Gastrocnemius medialis (tissue), 4 donors: ENCODE measurements at regions of chr18 and their contacts with region 1.

Region 1: DNA sequence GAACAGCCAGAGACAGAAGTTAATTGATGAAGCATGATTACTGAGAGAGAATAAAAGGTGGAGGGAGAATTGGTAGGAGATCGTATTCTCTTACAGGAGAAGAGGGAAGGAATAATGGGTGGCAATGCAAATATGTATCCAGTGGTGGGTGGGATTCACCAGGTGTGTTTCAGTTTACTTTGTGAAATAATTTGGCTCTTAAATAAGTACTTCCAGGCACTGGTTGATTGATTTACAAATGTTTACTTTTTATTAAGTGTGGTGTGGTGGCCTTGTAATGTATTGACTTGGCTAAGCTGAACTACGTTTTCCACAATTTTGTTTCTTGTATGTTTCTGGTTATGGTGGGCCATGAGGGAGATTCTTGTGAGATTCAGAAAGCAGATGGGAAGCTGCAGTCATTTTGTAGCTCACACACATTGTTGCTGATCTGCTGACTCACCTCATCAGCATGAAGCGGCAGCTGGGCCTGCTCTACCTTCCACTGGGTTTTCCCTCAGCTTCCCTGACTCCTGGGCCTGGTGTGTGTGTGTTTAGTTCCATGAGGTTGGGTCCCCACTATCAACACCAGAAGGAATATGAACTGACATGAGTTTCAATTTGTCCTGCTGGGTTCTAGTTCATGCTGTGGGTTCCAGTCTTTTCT is 32.6 kb downstream of the MYL12B start:
- DNase-seq: no peak
- ATAC-seq: no peak
- H3K4me3 ChIP-seq: no peak overlapping the region
- H3K27ac ChIP-seq: no peak overlapping the region
- H3K4me1 ChIP-seq: peaks cover 0 to 5% of the 10 kb centered on the region in 2 donors
- H3K27me3 ChIP-seq: no peaks in the 10 kb centered on the region
- CTCF ChIP-seq: no peak
- POLR2A ChIP-seq: no peak

Region 2: GRCh38 chr18:3466045-3466444 is 171.5 kb after region 1 on chr18:
- in situ Hi-C with region 1: loop called in 1 of 4 experiments (anchors 5 kb)
- intact Hi-C with region 1: no loop called
- DNase-seq: no peak
- ATAC-seq: no peak
- H3K4me3 ChIP-seq: no peak overlapping the region
- H3K27ac ChIP-seq: no peak overlapping the region
- H3K4me1 ChIP-seq: no peaks in the 10 kb centered on the region
- H3K27me3 ChIP-seq: no peaks in the 10 kb centered on the region
- CTCF ChIP-seq: no peak
- POLR2A ChIP-seq: no peak